ENCODE measurements at regions of chr15 and their contacts with region 1.

Region 1: GRCh38 chr15:49901996-49902684 is 216.9 kb downstream of the ATP8B4 start:
- DNase-seq: no peak
- H3K4me3 ChIP-seq: peak overlapping the region; percentile 5
- H3K27ac ChIP-seq: peak overlapping the region; percentile 65 to 85
- H3K4me1 ChIP-seq: peaks cover 12% of the 10 kb centered on the region
- H3K27me3 ChIP-seq: no peaks in the 10 kb centered on the region
- CTCF ChIP-seq: peak in 2 of 3 donors; percentile 19 to 59
- EP300 ChIP-seq: no peak
- POLR2A ChIP-seq: peak; percentile 22

Region 2: DNA sequence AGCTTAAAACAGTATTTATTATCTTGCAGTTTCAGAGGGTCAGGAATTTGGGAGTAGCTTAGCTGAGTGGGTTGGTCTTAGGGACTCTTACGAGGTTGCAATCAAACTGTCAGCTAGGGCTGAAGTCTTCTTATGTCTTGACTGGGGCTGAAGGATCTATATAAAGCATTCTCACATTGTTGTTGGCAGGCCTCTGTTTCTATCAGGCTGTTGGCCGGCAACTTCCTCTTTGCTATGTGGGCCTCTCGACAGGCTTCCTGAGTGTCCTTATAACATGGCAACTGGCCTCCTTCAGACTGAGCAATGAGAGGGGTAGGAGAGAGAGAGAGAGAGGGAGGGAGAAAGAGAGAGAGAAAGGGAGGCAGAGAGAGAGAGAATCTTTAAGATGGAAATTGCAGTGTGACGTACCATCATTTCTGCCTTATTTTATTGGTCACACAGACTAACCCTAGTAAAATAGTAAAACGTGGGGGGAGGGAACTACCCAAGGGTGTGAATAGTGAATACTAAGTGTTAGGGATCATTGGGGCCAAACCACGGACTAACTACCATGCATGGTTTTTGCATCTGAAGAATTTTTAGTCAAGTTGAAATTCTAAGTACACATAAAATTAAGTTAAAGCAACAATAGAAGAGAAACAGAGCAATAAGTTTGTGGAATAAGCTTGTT is 463.0 kb before region 1 on chr15:
- intact Hi-C with region 1: loop called in 1 of 4 experiments (anchors 10 kb)
- DNase-seq: peak in 1 of 5 donors; percentile 13
- H3K4me3 ChIP-seq: no peak overlapping the region
- H3K27ac ChIP-seq: peak overlapping the region in 1 of 2 donors; percentile 2
- H3K4me1 ChIP-seq: peaks cover 6% of the 10 kb centered on the region
- H3K27me3 ChIP-seq: no peaks in the 10 kb centered on the region
- CTCF ChIP-seq: no peak
- EP300 ChIP-seq: no peak
- POLR2A ChIP-seq: no peak

Region 3: GRCh38 chr15:49620658-49621368 is 281.3 kb before region 1 on chr15 and contains the starts of genes DTWD1 and FAM227B:
- intact Hi-C with region 1: loop called in 2 of 4 experiments (anchors 5 kb)
- DNase-seq: peak; percentile 95 to 97 (median 97)
- H3K4me3 ChIP-seq: peak within 1 kb of the TSS; percentile 81
- H3K27ac ChIP-seq: peak within 1 kb of the TSS; percentile 57 to 77
- H3K4me1 ChIP-seq: peaks cover 6% of the 10 kb centered on the region
- H3K27me3 ChIP-seq: no peaks in the 10 kb centered on the region
- CTCF ChIP-seq: peak in 1 of 3 donors; percentile 16
- EP300 ChIP-seq: peak; percentile 52
- POLR2A ChIP-seq: peak; percentile 98
- total RNA-seq, gene DTWD1: 18.5 to 55.9 (median 47.0) TPM
- total RNA-seq, gene FAM227B: 7.0 to 21.8 (median 13.3) TPM

Region 4: GRCh38 chr15:49990835-49991545 is 88.8 kb after region 1 on chr15:
- intact Hi-C with region 1: loop called in 1 of 4 experiments (anchors 10 kb)
- DNase-seq: no peak
- H3K4me3 ChIP-seq: no peak overlapping the region
- H3K27ac ChIP-seq: no peak overlapping the region
- H3K4me1 ChIP-seq: peaks cover 10% of the 10 kb centered on the region
- H3K27me3 ChIP-seq: no peaks in the 10 kb centered on the region
- CTCF ChIP-seq: no peak
- EP300 ChIP-seq: no peak
- POLR2A ChIP-seq: no peak

Region 5: DNA sequence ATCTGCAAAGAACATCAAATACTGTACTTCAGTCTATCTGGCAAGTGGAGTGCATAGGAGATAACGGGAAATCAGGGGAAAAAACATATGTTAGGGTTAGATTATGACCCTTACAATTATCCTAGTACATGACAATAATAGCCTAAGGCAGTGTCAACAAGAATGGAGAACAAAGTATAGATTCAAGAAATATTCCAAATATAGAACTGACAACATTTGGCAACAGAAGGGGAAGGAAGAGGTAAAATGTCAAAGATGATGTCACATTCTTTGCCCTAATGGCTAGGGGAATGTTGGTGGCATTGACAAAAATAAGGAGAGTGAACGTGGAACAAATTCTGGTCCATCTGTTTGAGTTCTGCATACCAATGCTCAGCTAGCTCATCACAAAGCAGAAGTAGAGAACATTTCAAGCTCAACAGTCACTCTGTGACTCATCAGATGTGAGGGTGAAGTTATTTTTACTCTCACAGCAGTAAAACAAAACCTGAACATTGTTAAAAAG is 232.4 kb after region 1 on chr15:
- intact Hi-C with region 1: loop called in 1 of 4 experiments (anchors 10 kb)
- DNase-seq: no peak
- H3K4me3 ChIP-seq: no peak overlapping the region
- H3K27ac ChIP-seq: no peak overlapping the region
- H3K4me1 ChIP-seq: no peaks in the 10 kb centered on the region
- H3K27me3 ChIP-seq: no peaks in the 10 kb centered on the region
- CTCF ChIP-seq: no peak
- EP300 ChIP-seq: no peak
- POLR2A ChIP-seq: no peak